Motor neuron (in vitro differentiated cells): ENCODE measurements at regions of chr3 and their contacts with region 1.

Region 1: DNA sequence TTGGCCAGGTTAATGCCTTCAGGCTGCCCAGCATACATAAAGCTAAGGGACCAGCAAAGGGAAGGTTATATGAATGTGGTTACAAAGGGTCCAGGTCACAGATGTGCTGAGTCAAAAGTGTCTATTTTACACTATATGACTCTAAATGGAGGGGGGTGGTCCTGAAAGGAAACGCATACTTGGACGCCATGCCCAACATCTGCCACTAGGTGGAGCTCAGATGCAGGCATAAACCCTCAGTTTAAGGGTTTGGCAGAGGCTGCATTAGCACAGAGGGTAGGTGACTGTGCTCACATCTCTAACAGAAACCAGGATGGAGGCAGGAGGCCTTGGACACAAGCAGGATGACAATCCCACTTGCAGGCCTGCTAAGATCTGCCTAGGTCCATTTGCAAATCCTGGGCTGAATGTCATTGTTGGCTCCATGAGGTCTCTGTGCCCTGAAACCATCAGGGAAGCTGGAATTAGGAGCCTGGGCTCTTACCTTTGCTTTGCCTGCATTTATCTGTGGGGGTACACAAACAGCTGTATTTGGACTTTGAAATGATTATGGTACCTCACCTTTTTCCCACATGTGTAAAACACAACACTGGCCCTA is 55.8 kb downstream of the ZNF621 start:
- ATAC-seq: peak; percentile 53 to 79 (median 66)
- H3K4me3 ChIP-seq: no peak overlapping the region
- H3K27ac ChIP-seq: no peak overlapping the region
- H3K4me1 ChIP-seq: peaks cover 0 to 10% of the 10 kb centered on the region in 2 donors

Region 2: GRCh38 chr3:41075975-41076374 is 495.4 kb after region 1 on chr3:
- in situ Hi-C with region 1: loop called in 1 of 9 experiments (anchors 25 kb)
- ATAC-seq: peak; percentile 74 to 97 (median 91)
- H3K4me3 ChIP-seq: no peak overlapping the region
- H3K27ac ChIP-seq: no peak overlapping the region
- H3K4me1 ChIP-seq: peaks cover 30 to 36% of the 10 kb centered on the region in 2 donors

Region 3: DNA sequence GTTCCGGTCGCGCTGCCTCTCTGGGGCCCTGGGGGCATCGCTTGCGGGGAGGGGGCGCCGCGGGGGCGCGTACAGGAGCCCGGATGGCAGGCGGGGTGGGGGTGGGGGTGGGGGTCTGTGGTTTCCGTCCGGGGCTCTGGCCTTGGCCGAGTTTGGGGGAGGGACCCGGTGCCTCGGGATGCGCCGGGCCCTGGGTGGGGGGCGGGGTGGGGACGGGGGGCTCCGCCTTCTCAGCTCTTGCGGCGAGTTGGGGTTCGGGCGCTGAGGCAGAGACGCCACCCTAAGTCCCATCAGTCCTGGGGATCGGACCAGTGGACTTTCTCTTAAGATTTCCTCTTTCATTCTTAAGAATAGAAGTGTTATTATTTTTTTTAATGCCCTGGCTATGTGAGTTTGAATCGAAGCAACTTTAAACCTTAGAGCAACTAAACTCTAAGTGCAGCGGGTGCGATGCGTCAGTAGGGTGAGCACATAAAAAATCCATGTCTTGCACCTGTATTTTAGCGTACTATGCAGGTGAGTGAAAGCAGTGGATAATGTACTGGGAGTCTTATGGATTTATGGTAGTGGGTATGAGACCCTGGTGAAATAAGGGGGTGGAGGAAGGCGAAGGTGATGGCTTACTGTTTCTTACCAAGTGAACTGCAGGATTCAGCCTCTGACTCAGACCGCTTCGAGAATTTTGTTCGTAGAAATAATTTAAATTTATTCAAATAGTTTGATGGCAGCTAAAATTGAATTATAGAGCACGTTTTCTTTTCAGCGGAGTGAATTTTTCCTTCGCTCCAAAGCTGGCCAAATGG is 619.5 kb after region 1 on chr3:
- in situ Hi-C with region 1: loop called in 3 of 9 experiments (anchors 25 kb)
- ATAC-seq: peak in 1 of 8 experiments; percentile 1
- H3K4me3 ChIP-seq: peak overlapping the region; percentile 84 to 97 (median 87)
- H3K27ac ChIP-seq: peak overlapping the region; percentile 88 to 96
- H3K4me1 ChIP-seq: peaks cover 10 to 43% of the 10 kb centered on the region in 2 donors

Region 4: DNA sequence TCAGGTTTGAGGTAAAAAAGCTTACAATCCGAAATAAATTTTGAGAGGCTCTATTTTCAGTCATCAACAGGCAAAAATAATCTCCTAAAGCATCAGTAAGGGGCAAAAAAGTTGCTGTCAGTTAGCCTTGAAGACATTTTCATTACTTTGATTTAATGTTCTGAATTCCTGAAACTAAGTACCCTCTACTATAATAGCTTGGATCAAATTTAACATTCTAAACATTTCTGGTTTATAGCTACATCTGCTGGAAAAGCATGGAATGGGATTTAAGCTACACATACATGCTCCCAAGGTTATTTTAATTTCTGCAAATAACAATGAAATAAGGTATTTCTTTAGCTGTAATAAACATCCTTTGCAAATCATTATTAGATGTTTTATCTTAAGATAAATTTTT is 1135.9 kb after region 1 on chr3:
- in situ Hi-C with region 1: loop called in 1 of 9 experiments (anchors 25 kb)
- ATAC-seq: peak in 2 of 8 experiments; percentile 55 to 72
- H3K4me3 ChIP-seq: no peak overlapping the region
- H3K27ac ChIP-seq: no peak overlapping the region
- H3K4me1 ChIP-seq: no peaks in the 10 kb centered on the region

Region 5: DNA sequence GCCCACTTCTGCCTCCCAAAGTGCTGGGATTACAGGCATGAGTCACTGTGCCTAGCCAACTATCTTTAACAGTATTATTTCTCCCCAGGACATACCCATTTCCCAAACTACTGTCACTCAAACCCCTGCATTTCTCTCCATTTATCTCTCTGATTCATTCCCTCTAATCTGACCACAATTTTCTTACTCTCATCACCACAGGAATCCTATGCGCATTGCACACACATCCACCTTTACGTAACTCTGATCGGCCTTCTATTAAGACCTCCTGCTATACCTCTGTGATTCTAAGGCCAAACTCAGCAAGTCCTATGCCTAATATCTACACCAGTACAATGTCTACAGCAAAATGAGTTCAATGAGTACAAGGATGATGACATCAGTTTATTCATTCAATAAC is 1146.3 kb after region 1 on chr3:
- in situ Hi-C with region 1: loop called in 2 of 9 experiments (anchors 25 kb)
- ATAC-seq: no peak
- H3K4me3 ChIP-seq: no peak overlapping the region
- H3K27ac ChIP-seq: no peak overlapping the region
- H3K4me1 ChIP-seq: no peaks in the 10 kb centered on the region

Region 6: DNA sequence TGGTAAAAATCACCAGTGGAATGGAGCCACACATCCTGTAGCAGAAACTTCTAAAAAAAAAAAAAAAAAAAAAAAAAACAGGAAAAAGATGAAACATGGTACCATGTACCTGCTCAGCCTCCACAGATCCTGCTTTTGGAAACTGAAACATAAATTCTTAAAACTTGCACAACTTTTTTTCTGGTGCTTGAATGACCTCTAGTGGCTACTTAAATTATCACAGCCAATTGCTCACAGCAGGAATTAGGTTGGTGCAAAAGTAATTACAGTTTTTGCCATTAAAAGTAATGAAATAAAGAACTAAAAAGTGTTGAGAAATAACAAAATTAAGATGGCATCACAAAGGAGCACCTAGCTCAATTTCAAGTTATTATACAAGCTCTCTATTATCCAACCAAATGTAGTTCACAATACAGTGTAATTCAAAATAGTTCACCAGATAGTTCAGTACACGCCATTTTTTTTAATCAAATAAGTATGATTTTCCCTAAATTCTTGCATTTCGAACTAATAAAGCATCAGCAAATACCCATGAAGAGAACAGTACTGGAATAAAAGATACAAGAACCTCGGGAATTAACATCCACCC is 1300.7 kb after region 1 on chr3:
- in situ Hi-C with region 1: loop called (anchors 10 to 25 kb)
- ATAC-seq: no peak
- H3K4me3 ChIP-seq: no peak overlapping the region
- H3K27ac ChIP-seq: no peak overlapping the region
- H3K4me1 ChIP-seq: no peaks in the 10 kb centered on the region